HAP-1 (cell line): ENCODE measurements at regions of chr11 and their contacts with region 1.

Region 1: GRCh38 chr11:128824191-128825049 is 42.7 kb downstream of the KCNJ1 start:
- DNase-seq: no peak
- H3K4me3 ChIP-seq: no peak overlapping the region
- H3K4me1 ChIP-seq: no peaks in the 10 kb centered on the region
- H3K27me3 ChIP-seq: peaks cover 5% of the 10 kb centered on the region; the same call in 1 of the 2 replicates

Region 2: DNA sequence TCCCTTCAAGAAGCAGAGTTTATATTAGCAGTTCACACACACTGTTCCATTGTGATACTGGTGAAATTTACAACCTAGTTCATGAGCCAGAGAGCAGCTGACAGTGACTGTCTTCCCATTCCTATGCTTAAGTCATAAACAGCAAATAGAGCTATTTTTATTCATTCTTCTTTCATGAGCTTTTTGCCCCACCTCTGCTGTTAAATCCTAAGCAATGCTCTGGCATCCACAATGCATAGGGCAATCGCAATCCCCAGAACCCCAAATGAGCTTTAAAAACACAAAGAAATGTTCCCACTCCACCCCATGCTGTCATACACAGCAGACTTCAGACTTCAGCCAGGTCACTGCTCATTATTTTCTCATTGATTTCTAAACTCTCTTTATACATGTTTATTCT is 544.6 kb before region 1 on chr11:
- in situ Hi-C with region 1: loop called (anchors 10 kb)
- DNase-seq: no peak
- H3K4me3 ChIP-seq: no peak overlapping the region
- H3K4me1 ChIP-seq: no peaks in the 10 kb centered on the region
- H3K27me3 ChIP-seq: no peaks in the 10 kb centered on the region